AG04450 (cell line): ENCODE measurements at regions of chr22 and their contacts with region 1.

Region 1: DNA sequence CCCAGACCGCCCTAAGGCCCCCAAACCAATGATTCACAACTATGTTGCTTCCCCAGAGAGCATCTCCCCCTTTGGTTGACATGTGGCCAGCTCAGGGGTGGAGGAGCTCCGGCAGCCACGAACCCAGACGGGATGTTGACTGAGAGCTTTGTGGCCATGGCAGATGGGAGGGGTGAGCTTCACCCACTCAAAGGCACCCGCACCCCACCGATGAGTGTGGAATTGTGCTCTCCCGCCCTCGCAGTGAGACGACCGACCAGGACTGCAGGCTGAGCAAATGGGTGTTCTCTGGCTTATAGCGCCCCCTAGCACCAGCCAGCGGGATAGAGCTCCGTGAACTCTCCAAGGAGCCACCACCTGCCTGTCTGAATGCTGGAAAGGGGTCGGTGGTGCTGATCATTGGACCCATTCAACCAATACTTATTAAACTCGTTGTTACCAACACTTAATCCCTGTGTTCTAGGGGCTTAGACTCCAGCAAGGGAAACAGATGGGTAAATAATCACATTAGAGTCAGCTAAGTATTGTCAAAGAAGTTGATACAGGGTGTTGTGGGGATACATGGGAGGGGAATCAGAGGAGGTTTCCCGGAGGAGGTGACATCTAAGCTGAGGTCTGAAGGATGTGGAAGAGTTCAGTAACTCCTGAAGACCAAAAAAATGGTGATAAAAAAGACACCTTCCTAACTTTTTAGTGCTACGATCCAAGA is 4.5 kb upstream of the TIMP3 start:
- DNase-seq: peak; percentile 63
- H3K4me3 ChIP-seq: 0 out of 2 replicates have a peak overlapping the region, but pooled peaks have one; percentile 18
- H3K27ac ChIP-seq: peak overlapping the region; percentile 13
- H3K27me3 ChIP-seq: no peaks in the 10 kb centered on the region
- CTCF ChIP-seq: peak; percentile 93

Region 2: GRCh38 chr22:32474635-32475467 is 322.2 kb before region 1 on chr22 and contains the start of gene FBXO7:
- CTCF ChIA-PET with region 1: interaction called, 24 read pairs
- POLR2A ChIA-PET with region 1: interaction called, 16 read pairs
- DNase-seq: peak; percentile 79
- H3K4me3 ChIP-seq: peak within 1 kb of the TSS; percentile 90
- H3K27ac ChIP-seq: peak within 1 kb of the TSS; percentile 90
- H3K27me3 ChIP-seq: no peaks in the 10 kb centered on the region
- CTCF ChIP-seq: peak; percentile 40
- polyA plus RNA-seq, gene FBXO7: 144 and 156 TPM in 2 replicates

Region 3: DNA sequence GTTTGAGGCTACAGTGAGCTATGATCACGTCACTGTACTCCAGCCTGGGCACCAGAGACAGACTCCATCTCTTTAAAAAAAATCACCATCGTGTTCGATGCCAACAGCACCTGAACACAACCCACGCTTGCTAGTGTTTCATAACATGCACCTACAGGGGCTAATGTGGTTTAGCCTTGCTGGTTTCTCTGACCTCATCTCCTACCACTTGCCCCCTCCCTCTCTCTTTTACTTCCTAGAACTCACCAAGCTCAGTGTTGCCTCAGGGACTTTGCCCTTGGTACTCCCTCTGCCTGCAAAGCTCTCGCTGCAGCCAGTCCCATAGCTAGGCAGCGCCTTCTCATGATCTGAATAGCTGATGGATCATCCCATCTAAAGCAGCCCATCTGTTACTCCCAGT is 222.6 kb before region 1 on chr22:
- CTCF ChIA-PET with region 1: interaction called, 33 read pairs
- POLR2A ChIA-PET with region 1: interaction called, 4 read pairs
- DNase-seq: no peak
- H3K4me3 ChIP-seq: no peak overlapping the region
- H3K27ac ChIP-seq: no peak overlapping the region
- H3K27me3 ChIP-seq: peaks cover 18% of the 10 kb centered on the region
- CTCF ChIP-seq: no peak

Region 4: GRCh38 chr22:32655068-32655467 is 142.0 kb before region 1 on chr22:
- CTCF ChIA-PET with region 1: interaction called, 109 read pairs
- POLR2A ChIA-PET with region 1: interaction called, 14 read pairs
- DNase-seq: no peak
- H3K4me3 ChIP-seq: no peak overlapping the region
- H3K27ac ChIP-seq: no peak overlapping the region
- H3K27me3 ChIP-seq: no peaks in the 10 kb centered on the region
- CTCF ChIP-seq: no peak

Region 5: GRCh38 chr22:32723643-32724042 is 73.4 kb before region 1 on chr22:
- CTCF ChIA-PET with region 1: interaction called, 5 read pairs
- POLR2A ChIA-PET with region 1: interaction called, 13 read pairs
- DNase-seq: peak; percentile 83
- H3K4me3 ChIP-seq: no peak overlapping the region
- H3K27ac ChIP-seq: peak overlapping the region; percentile 98
- H3K27me3 ChIP-seq: no peaks in the 10 kb centered on the region
- CTCF ChIP-seq: no peak

Region 6: GRCh38 chr22:32810561-32811004 is 13.6 kb after region 1 on chr22:
- CTCF ChIA-PET with region 1: interaction called, 21 read pairs
- POLR2A ChIA-PET with region 1: interaction called, 15 read pairs
- DNase-seq: no peak
- H3K4me3 ChIP-seq: no peak overlapping the region
- H3K27ac ChIP-seq: no peak overlapping the region
- H3K27me3 ChIP-seq: no peaks in the 10 kb centered on the region
- CTCF ChIP-seq: no peak

Region 7: DNA sequence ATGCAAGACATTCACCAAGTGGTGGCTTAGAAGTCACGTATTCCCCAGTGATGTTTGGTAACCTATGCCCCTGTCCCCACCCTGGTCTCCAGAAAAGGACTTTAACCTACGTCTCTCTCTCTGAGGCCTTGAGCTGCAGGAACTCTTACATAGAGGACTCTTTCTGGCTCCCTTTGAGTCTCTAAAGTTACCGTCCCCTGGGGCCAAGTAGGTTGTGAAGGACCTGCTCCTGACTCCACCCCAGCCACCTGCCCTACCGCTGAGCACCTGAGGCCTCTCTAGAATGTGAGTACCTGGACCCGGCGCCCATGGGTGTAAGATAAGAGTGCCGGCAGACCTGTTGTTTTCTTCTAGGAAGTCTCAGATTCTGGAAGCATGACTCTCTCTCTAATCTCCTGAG is 99.9 kb after region 1 on chr22:
- CTCF ChIA-PET with region 1: no interaction called
- POLR2A ChIA-PET with region 1: no interaction called
- DNase-seq: no peak
- H3K4me3 ChIP-seq: no peak overlapping the region
- H3K27ac ChIP-seq: no peak overlapping the region
- H3K27me3 ChIP-seq: peaks cover 25% of the 10 kb centered on the region
- CTCF ChIP-seq: no peak

Region 8: DNA sequence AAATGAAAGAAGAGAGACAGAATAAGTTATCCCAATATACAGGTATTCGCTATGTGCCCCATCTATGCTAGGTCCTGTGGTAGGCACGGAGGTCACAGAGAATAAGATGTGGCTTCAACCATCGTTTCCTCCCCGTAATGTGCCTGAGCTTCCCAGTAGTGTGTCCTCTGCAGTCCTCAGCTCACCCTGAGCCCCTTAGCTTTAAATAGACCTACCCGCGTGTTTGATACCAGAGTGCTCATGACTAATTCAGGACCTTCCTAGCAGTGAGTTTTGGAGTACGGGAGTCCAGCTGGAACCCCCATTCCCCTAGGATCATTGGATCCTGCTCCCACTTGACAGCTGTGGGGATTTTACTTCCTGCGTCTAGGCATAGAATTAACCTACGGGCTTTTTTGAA is 298.6 kb after region 1 on chr22:
- CTCF ChIA-PET with region 1: no interaction called
- POLR2A ChIA-PET with region 1: no interaction called
- DNase-seq: no peak
- H3K4me3 ChIP-seq: no peak overlapping the region
- H3K27ac ChIP-seq: no peak overlapping the region
- H3K27me3 ChIP-seq: no peaks in the 10 kb centered on the region
- CTCF ChIP-seq: no peak

Region 9: DNA sequence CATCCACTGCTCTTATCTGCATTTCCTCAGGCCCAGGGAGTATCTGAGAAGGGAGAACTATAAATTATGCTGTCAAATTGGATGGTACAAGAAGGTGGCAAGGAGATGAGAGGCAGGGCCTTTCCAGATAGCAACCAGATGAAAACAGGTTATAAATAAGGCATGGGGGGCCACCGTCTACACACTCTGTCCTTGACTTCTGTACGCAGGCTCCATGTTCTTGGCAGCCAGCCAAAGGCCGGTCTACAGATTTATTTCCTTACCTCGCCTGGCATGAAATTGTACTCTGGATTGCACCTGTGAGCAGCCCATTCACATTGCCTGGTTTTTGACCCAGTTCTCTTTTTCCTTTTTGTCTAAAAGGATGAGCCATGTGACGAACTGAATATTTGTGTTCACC is 1280.4 kb after region 1 on chr22:
- CTCF ChIA-PET with region 1: no interaction called
- POLR2A ChIA-PET with region 1: no interaction called
- DNase-seq: no peak
- H3K4me3 ChIP-seq: no peak overlapping the region
- H3K27ac ChIP-seq: no peak overlapping the region
- H3K27me3 ChIP-seq: no peaks in the 10 kb centered on the region
- CTCF ChIP-seq: no peak